ENCODE measurements at regions of chr2 and their contacts with region 1.

Region 1: GRCh38 chr2:27086090-27086723 is 365 bp upstream of the KHK start:
- DNase-seq: peak; percentile 90
- H3K4me3 ChIP-seq: peak overlapping the region; percentile 38 to 56
- H3K27ac ChIP-seq: peak overlapping the region; percentile 71 to 80
- H3K4me1 ChIP-seq: peaks cover 7% of the 10 kb centered on the region
- H3K27me3 ChIP-seq: no peaks in the 10 kb centered on the region
- CTCF ChIP-seq: peak; percentile 90 to 98 (median 96)
- POLR2A ChIP-seq: peak; percentile 46

Region 2: GRCh38 chr2:26968001-26968400 is 118.2 kb before region 1 on chr2:
- intact Hi-C with region 1: loop called (anchors 5 kb)
- DNase-seq: no peak
- H3K4me3 ChIP-seq: no peak overlapping the region
- H3K27ac ChIP-seq: no peak overlapping the region
- H3K4me1 ChIP-seq: no peaks in the 10 kb centered on the region
- H3K27me3 ChIP-seq: no peaks in the 10 kb centered on the region
- CTCF ChIP-seq: no peak
- POLR2A ChIP-seq: no peak

Region 3: GRCh38 chr2:27032495-27033252 is 53.5 kb before region 1 on chr2 and contains the start of gene TMEM214:
- intact Hi-C with region 1: loop called (anchors 5 kb)
- DNase-seq: peak; percentile 86
- H3K4me3 ChIP-seq: peak within 1 kb of the TSS; percentile 96
- H3K27ac ChIP-seq: peak within 1 kb of the TSS; percentile 79 to 84
- H3K4me1 ChIP-seq: no peaks in the 10 kb centered on the region
- H3K27me3 ChIP-seq: no peaks in the 10 kb centered on the region
- CTCF ChIP-seq: peak in 2 of 4 experiments; percentile 6 to 28
- POLR2A ChIP-seq: peak; percentile 75
- total RNA-seq, gene TMEM214: 44.5 to 75.9 TPM

Region 4: DNA sequence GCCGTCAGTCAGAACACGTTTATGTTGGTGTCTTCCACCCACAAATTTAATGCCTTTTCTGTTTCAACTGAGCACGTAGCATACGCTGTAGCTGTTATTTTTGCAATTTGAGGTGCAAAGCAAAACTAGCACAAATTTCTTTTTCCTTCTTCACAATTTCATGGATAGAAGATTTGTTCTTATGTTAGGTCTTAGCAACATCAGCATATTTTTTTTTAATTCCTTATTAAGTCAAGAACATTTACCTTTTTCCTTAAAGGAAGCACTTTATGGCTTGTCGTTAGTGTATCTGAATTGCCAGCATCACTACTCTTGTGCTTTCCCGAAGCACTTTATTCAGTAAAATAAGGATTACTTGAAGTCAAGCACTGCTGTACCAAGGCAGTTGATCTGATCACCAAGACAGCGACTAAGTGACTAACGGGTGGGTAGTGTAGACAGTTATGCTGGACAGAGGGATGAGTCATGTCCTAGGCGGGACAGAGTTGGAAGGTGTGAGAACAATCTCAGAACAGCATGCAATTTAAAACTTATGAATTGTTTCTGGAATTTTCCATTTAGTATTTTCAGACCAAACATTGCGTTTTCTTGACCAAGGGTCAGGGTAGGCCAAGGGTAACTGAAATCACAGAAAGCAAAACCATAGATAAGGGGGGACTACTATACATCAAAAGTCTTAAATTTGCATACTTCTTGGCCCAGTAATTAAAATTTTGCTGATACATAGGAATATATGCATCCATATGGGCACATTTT is 817.6 kb after region 1 on chr2:
- intact Hi-C with region 1: no loop called
- DNase-seq: no peak
- H3K4me3 ChIP-seq: no peak overlapping the region
- H3K27ac ChIP-seq: no peak overlapping the region
- H3K4me1 ChIP-seq: no peaks in the 10 kb centered on the region
- H3K27me3 ChIP-seq: no peaks in the 10 kb centered on the region
- CTCF ChIP-seq: no peak
- POLR2A ChIP-seq: no peak

Region 5: DNA sequence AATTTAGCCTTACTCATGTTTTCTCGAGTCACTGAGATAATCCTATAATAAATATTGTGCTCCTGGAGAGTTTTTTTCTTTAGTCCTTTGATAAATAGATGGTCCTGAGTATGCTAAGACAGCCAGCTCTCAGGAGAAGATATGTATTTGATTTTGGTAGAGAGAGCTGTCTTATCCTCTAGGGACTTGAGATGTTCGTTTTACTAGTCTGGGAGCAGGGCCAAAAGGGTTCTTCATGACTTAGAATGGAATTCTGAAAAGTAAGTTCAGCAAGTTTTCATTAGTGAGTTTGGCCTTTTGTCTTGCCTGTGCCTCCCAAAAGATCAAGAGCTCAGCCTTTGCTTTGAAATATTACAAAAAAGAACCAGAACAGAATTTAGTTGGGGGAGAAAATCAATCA is 1051.0 kb after region 1 on chr2:
- intact Hi-C with region 1: no loop called
- DNase-seq: peak; percentile 80
- H3K4me3 ChIP-seq: no peak overlapping the region
- H3K27ac ChIP-seq: peak overlapping the region; percentile 15 to 62
- H3K4me1 ChIP-seq: peaks cover 4% of the 10 kb centered on the region
- H3K27me3 ChIP-seq: no peaks in the 10 kb centered on the region
- CTCF ChIP-seq: no peak
- POLR2A ChIP-seq: no peak